Panc1 (cell line): ENCODE measurements at regions of chr2 and their contacts with region 1.

Region 1: GRCh38 chr2:133504566-133505393 is 63.5 kb downstream of the NCKAP5 start:
- DNase-seq: no peak
- ATAC-seq: no peak
- H3K4me3 ChIP-seq: no peak overlapping the region
- H3K27ac ChIP-seq: no peak overlapping the region
- H3K4me1 ChIP-seq: no peaks in the 10 kb centered on the region
- H3K27me3 ChIP-seq: no peaks in the 10 kb centered on the region
- CTCF ChIP-seq: no peak

Region 2: DNA sequence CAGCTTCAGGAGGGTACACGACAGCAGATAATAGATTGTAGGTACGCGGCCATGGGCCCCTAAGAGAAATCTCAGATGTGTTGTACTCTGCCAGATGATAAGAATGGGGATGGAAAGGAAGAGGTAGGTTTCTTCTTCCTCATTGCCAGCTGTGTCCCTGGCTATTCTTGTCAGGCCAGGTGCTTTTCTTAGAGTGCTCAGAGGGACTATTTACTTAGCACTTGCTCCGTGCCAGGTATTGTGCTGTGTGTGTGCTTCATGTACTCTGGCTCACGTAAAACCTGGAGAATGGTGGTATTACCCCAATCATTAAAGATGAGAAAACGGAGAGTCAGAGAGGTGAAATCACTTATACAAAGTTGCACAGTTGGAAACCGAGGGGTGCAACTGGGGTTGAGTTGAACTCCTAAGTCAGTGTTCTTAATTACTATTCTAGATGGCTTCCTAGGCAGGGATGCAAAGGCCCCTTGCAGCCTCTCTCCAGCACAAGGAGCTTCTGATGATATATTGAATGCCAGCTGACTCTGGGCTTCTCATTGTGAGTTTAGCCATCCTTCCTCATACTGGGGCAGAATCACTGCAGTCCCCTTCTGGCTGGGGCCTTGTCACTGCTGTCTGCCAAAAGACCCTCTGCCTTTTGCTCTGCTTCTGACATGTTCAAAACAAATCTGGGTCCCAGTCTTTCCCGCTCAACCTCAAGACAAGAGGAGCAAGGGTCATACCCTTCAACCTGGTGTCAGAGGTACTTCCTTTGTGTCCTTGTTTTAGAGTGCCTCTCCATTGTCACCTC is 895.5 kb before region 1 on chr2:
- CTCF ChIA-PET with region 1: no interaction called
- POLR2A ChIA-PET with region 1: interaction called, 10 read pairs
- in situ Hi-C with region 1: no loop called
- intact Hi-C with region 1: no loop called
- DNase-seq: no peak
- ATAC-seq: no peak
- H3K4me3 ChIP-seq: no peak overlapping the region
- H3K27ac ChIP-seq: no peak overlapping the region
- H3K4me1 ChIP-seq: no peaks in the 10 kb centered on the region
- H3K27me3 ChIP-seq: no peaks in the 10 kb centered on the region
- CTCF ChIP-seq: no peak

Region 3: GRCh38 chr2:133247631-133248030 is 257.1 kb before region 1 on chr2:
- CTCF ChIA-PET with region 1: no interaction called
- POLR2A ChIA-PET with region 1: no interaction called
- in situ Hi-C with region 1: no loop called
- intact Hi-C with region 1: no loop called
- DNase-seq: no peak
- ATAC-seq: no peak
- H3K4me3 ChIP-seq: no peak overlapping the region
- H3K27ac ChIP-seq: no peak overlapping the region
- H3K4me1 ChIP-seq: no peaks in the 10 kb centered on the region
- H3K27me3 ChIP-seq: no peaks in the 10 kb centered on the region
- CTCF ChIP-seq: no peak

Region 4: GRCh38 chr2:133953524-133953923 is 448.7 kb after region 1 on chr2:
- CTCF ChIA-PET with region 1: no interaction called
- POLR2A ChIA-PET with region 1: no interaction called
- in situ Hi-C with region 1: no loop called
- intact Hi-C with region 1: no loop called
- DNase-seq: no peak
- ATAC-seq: no peak
- H3K4me3 ChIP-seq: no peak overlapping the region
- H3K27ac ChIP-seq: no peak overlapping the region
- H3K4me1 ChIP-seq: no peaks in the 10 kb centered on the region
- H3K27me3 ChIP-seq: no peaks in the 10 kb centered on the region
- CTCF ChIP-seq: no peak

Region 5: DNA sequence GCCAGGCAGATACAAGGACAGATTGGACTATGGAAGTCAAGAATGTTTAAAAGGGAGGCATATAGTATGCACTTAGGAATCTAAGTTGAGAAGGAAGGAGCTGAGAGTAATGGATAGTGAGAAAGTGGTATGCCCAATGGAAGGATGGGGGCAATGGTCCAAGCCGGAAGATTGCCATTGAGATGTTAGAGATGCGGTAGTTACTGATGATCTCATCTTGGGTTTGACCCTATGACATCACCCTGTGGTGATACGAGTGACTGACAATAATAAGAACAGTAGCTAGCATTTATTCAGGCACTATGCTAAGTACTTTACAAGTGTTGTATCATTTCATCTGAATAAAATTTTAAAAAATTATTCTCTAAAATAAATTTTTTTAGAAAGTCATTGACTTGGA is 1295.2 kb after region 1 on chr2:
- CTCF ChIA-PET with region 1: no interaction called
- POLR2A ChIA-PET with region 1: no interaction called
- in situ Hi-C with region 1: no loop called
- intact Hi-C with region 1: no loop called
- DNase-seq: no peak
- ATAC-seq: no peak
- H3K4me3 ChIP-seq: no peak overlapping the region
- H3K27ac ChIP-seq: no peak overlapping the region
- H3K4me1 ChIP-seq: no peaks in the 10 kb centered on the region
- H3K27me3 ChIP-seq: no peaks in the 10 kb centered on the region
- CTCF ChIP-seq: no peak